Prostate gland (tissue), 2 donors: ENCODE measurements at regions of chr1 and their contacts with region 1.

Region 1: GRCh38 chr1:47192458-47193384 is 2.9 kb upstream of the PDZK1IP1 start:
- DNase-seq: peak; percentile 65
- H3K4me3 ChIP-seq: no peak overlapping the region
- H3K27ac ChIP-seq: no peak overlapping the region
- H3K4me1 ChIP-seq: no peaks in the 10 kb centered on the region
- H3K27me3 ChIP-seq: no peaks in the 10 kb centered on the region
- CTCF ChIP-seq: peak; percentile 85 to 91 (median 89)
- POLR2A ChIP-seq: no peak

Region 2: DNA sequence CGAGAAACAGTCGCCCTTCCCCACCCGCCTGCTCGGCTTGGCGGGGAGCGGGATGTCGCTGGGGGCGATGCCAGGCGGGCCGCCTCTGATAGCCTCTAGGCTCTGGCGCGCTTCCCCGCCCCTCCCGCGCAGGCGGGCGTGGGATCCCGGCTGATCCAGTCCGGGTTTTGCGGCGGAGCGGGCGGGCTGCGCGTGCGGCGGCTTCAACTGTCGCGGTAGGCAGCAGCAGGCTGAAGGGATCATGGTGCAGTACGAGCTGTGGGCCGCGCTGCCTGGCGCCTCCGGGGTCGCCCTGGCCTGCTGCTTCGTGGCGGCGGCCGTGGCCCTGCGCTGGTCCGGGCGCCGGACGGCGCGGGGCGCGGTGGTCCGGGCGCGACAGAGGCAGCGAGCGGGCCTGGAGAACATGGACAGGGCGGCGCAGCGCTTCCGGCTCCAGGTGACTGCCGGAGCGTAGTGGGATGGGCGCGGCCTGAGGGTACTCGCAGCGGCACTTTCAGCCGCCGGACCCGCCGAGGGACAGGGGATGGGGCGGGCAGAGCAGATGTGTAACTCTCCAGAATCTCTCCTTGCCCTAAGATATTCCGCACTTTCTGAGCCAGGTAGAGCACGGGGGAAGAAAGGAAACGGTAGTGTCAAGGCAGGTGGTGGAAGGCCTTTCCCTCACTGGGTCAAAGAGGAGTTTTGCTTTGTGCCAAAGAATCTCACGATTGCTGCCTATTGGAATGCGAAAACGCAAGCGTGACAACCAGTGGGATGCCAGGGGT is 798.4 kb before region 1 on chr1 and contains the start of gene FAAH:
- intact Hi-C with region 1: no loop called
- DNase-seq: peak; percentile 68
- H3K4me3 ChIP-seq: peak within 1 kb of the TSS; percentile 47 to 54
- H3K27ac ChIP-seq: peak within 1 kb of the TSS; percentile 70 to 76
- H3K4me1 ChIP-seq: peaks cover 14% of the 10 kb centered on the region
- H3K27me3 ChIP-seq: no peaks in the 10 kb centered on the region
- CTCF ChIP-seq: no peak
- POLR2A ChIP-seq: no peak
- total RNA-seq, gene FAAH: 122 to 264 TPM

Region 3: GRCh38 chr1:47235241-47235681 is 42.5 kb after region 1 on chr1:
- intact Hi-C with region 1: no loop called
- DNase-seq: no peak
- H3K4me3 ChIP-seq: no peak overlapping the region
- H3K27ac ChIP-seq: no peak overlapping the region
- H3K4me1 ChIP-seq: no peaks in the 10 kb centered on the region
- H3K27me3 ChIP-seq: peaks cover 20% of the 10 kb centered on the region
- CTCF ChIP-seq: no peak
- POLR2A ChIP-seq: no peak

Region 4: DNA sequence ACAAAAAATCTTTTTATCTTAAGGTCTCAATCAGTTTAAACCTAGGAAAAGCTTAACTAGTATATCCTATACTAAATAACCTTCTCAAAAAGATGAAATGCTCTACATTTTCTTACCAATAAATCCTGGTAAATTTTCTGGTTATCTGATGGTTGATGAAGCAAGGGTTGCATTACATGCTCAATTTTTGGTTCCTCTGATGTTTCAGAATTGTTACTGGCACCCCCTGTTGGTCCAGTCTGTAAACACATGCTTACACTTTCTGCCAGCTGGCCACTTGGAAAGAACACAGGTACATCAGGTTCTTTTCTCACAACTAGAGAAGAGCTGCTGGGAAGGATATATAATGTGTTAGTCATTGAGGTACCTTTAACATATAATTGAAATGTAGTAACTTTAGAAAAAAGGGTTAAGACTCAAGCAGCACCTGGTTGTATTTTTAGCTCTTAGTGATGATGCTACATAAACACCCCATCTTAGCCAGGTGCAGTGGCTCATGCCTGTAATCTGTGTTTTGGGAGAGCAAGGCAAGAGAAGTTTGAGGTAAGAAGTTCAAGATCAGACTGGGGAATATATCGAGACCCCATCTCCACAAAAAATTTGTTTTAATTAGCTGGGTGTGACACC is 70.2 kb after region 1 on chr1:
- intact Hi-C with region 1: loop called (anchors 10 kb)
- DNase-seq: peak; percentile 21
- H3K4me3 ChIP-seq: no peak overlapping the region
- H3K27ac ChIP-seq: no peak overlapping the region
- H3K4me1 ChIP-seq: no peaks in the 10 kb centered on the region
- H3K27me3 ChIP-seq: no peaks in the 10 kb centered on the region
- CTCF ChIP-seq: peak in 3 of 4 experiments; percentile 21 to 53 (median 46)
- POLR2A ChIP-seq: no peak

Region 5: DNA sequence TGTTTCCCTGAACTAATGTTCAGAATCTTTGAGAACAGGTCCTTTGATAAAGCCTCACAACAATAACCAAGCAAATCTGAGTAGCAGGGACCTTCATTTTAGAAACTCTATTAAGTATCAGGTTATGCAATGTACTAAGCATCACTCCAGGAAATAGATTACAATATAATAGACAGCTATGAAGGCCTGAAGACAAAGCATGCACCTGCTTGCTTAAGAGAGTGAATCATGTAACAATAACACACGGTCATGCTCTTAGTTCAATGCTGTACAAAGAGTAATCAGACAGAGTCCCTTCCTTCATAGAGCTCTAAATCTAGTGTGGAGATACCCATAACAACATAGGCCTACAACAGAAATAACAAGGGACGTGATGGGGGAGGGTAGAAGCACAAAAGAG is 132.8 kb after region 1 on chr1:
- intact Hi-C with region 1: loop called (anchors 10 kb)
- DNase-seq: no peak
- H3K4me3 ChIP-seq: no peak overlapping the region
- H3K27ac ChIP-seq: no peak overlapping the region
- H3K4me1 ChIP-seq: no peaks in the 10 kb centered on the region
- H3K27me3 ChIP-seq: no peaks in the 10 kb centered on the region
- CTCF ChIP-seq: no peak
- POLR2A ChIP-seq: no peak

Region 6: GRCh38 chr1:47424336-47424982 is 231.7 kb after region 1 on chr1:
- intact Hi-C with region 1: loop called (anchors 5 kb)
- DNase-seq: peak; percentile 22
- H3K4me3 ChIP-seq: no peak overlapping the region
- H3K27ac ChIP-seq: no peak overlapping the region
- H3K4me1 ChIP-seq: no peaks in the 10 kb centered on the region
- H3K27me3 ChIP-seq: no peaks in the 10 kb centered on the region
- CTCF ChIP-seq: peak in 3 of 4 experiments; percentile 59 to 72 (median 71)
- POLR2A ChIP-seq: no peak